Esophagus squamous epithelium (tissue), 5 donors: ENCODE measurements at regions of chr3 and their contacts with region 1.

Region 1: GRCh38 chr3:113287803-113288648 is 76.7 kb downstream of the BOC start:
- DNase-seq: no peak
- H3K4me3 ChIP-seq: no peak overlapping the region
- H3K27ac ChIP-seq: peak overlapping the region in 3 of 4 donors; percentile 60 to 77 (median 67)
- H3K4me1 ChIP-seq: peaks cover 7 to 53% (median 23%) of the 10 kb centered on the region in 3 donors
- H3K27me3 ChIP-seq: no peaks in the 10 kb centered on the region
- CTCF ChIP-seq: peak; percentile 91 to 100 (median 98)
- POLR2A ChIP-seq: no peak

Region 2: DNA sequence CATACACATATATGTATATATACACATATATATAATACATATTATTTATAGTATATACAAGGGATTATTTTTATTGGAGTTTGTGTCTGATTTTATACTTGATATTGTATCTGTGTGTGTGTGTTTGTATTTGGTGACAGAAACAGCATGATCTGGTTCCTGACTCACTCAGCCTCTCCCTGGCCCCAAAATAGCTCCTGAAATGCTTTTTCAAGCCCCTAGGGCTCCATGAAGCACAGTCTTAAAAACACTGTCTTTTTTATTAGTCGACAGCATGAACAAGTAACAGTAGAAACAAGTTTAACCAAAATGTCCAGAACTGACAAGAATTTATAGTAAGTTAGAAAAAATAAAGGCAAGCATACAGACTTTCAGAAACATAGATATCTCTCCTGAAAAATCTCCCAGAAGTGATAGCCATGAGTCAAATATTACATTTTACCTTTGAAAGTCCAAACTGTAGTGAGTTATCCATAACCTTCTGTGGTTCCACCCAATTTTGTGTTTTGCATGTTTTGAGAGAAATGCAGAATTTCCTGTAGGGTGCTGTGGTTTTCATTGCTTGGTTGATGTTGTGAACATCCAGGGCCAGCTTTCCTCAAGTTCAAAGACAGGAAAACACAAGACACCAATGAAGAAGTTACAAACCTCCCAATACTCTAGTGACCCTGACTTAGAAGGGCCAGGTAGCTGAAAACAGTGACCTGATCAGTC is 548.6 kb before region 1 on chr3:
- intact Hi-C with region 1: no loop called
- DNase-seq: no peak
- H3K4me3 ChIP-seq: no peak overlapping the region
- H3K27ac ChIP-seq: no peak overlapping the region
- H3K4me1 ChIP-seq: peaks cover 0 to 25% (median 0%) of the 10 kb centered on the region in 3 donors
- H3K27me3 ChIP-seq: no peaks in the 10 kb centered on the region
- CTCF ChIP-seq: peak in 1 of 6 experiments; percentile 25
- POLR2A ChIP-seq: no peak

Region 3: DNA sequence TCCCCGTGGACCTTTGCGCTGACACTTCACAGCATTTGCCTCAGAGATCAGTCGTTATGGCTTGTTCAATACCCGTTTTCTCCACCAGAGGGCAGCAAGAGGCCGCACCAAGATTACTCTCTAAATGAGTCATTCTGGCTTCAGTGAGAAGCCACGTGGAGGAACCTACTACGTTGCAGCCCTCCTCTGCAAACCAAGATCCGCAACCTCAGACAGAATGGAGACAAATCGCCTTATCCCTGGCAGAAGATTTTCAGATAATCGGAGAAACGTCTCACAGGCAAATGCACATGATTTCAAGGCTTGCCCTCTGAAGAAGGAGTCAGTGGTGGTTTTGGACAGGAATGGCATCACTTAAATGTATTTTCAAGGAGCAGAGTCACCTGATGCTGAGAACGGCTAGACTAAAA is 236.7 kb before region 1 on chr3:
- intact Hi-C with region 1: loop called (anchors 5 kb)
- DNase-seq: peak; percentile 38
- H3K4me3 ChIP-seq: peak overlapping the region in 1 of 4 donors; percentile 31
- H3K27ac ChIP-seq: peak overlapping the region; percentile 2 to 71 (median 48)
- H3K4me1 ChIP-seq: peaks cover 0 to 28% (median 5%) of the 10 kb centered on the region in 3 donors
- H3K27me3 ChIP-seq: peaks cover 0 to 1% (median 0%) of the 10 kb centered on the region in 4 donors
- CTCF ChIP-seq: peak; percentile 87 to 99 (median 98)
- POLR2A ChIP-seq: no peak

Region 4: GRCh38 chr3:113136071-113136470 is 152.0 kb before region 1 on chr3:
- intact Hi-C with region 1: loop called (anchors 5 kb)
- DNase-seq: no peak
- H3K4me3 ChIP-seq: no peak overlapping the region
- H3K27ac ChIP-seq: peak overlapping the region in 1 of 4 donors; percentile 1
- H3K4me1 ChIP-seq: peaks cover 0 to 33% (median 10%) of the 10 kb centered on the region in 3 donors
- H3K27me3 ChIP-seq: no peaks in the 10 kb centered on the region
- CTCF ChIP-seq: peak in 5 of 6 experiments; percentile 50 to 80 (median 57)
- POLR2A ChIP-seq: no peak

Region 5: DNA sequence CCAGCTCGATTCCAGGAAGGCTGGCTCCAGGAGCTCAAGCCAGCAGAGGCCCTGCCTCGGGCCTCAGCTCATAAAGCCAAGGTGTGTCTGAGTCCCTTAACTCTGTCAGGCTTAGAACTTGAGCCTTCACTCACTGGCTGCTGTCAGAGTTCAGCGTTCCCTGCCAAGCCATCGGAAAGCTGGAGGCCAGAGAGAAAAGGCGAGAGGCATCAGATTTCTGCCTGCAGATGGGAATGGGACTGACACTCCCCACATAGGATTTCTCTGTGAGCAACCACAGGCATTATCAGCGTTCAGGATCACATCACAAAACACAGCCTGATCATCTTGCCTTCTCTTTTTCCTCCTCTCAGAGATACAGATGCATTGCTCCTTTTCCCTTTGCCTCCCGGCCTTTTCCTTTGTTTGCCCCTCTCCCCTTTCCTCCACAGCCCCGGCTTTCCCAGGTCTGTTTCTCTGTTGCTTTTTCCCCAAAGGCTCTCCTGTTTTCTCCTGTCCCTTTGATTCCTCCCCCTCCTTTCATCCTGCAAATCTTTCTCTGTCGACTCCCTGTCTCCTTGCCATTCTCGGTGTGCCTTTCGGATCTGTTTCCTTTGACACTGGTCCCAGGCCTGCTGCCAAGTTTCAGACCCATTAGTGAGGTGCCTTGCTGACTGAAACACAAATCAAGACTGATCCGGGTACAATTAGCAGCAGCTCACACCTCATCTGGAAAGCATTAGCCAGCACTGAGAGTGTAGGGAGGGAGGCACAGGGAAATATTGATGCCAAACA is 121.1 kb before region 1 on chr3:
- intact Hi-C with region 1: no loop called
- DNase-seq: no peak
- H3K4me3 ChIP-seq: no peak overlapping the region
- H3K27ac ChIP-seq: peak overlapping the region; percentile 54 to 78 (median 73)
- H3K4me1 ChIP-seq: peaks cover 10 to 40% (median 22%) of the 10 kb centered on the region in 3 donors
- H3K27me3 ChIP-seq: no peaks in the 10 kb centered on the region
- CTCF ChIP-seq: no peak
- POLR2A ChIP-seq: no peak